A673 (cell line): ENCODE measurements at regions of chr5 and their contacts with region 1.

Region 1: DNA sequence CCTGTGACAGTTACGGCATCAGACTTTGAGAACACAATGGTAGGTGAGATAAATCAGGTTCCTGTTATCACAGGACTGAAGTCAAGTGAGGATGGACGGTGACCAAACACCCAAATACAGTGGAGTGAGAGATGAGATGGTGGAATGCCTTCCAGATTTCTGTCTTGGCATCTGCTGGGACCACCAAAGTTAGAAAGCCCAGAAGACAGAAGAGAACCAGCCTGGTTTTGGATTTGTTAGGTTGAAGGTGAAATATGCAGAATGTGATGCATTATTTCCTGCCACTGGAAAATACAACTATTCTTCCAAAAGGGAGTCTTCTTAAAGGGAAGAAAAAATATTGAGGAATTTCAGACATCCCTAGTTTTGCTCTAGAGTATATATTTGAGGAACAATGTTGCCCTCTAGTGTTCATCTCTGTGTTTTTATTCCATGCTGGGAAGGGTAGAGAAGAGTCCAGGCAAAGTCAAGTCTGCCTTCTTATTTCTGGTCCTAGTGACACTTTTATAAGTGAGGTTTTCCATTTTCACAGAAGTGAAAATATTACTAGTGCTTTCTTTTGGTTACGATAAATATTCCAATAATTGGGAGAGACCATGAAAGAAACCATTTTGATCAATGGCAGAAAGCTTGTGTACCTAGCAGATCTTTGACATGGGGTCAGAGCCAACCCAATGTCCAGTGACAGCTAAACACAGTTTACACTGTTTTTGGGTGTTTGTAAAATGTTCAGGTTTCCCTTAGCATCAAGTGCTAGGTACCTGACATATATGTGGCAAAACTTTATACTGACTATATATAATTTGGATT is 142.3 kb upstream of the ANKH start:
- DNase-seq: peak; percentile 70
- H3K4me3 ChIP-seq: no peak overlapping the region
- H3K27ac ChIP-seq: no peak overlapping the region
- H3K4me1 ChIP-seq: peaks cover 3% of the 10 kb centered on the region
- H3K27me3 ChIP-seq: no peaks in the 10 kb centered on the region
- CTCF ChIP-seq: peak; percentile 69

Region 2: GRCh38 chr5:14727428-14727865 is 286.4 kb before region 1 on chr5:
- CTCF ChIA-PET with region 1: no interaction called
- POLR2A ChIA-PET with region 1: no interaction called
- intact Hi-C with region 1: loop called (anchors 1 kb)
- DNase-seq: peak; percentile 83
- H3K4me3 ChIP-seq: no peak overlapping the region
- H3K27ac ChIP-seq: no peak overlapping the region
- H3K4me1 ChIP-seq: no peaks in the 10 kb centered on the region
- H3K27me3 ChIP-seq: no peaks in the 10 kb centered on the region
- CTCF ChIP-seq: peak; percentile 93